Motor neuron (in vitro differentiated cells): ENCODE measurements at regions of chr9 and their contacts with region 1.

Region 1: GRCh38 chr9:76458903-76459690 is at the start of gene GCNT1:
- ATAC-seq: peak; percentile 79 to 97 (median 94)
- H3K4me3 ChIP-seq: peak within 1 kb of the TSS; percentile 46 to 64 (median 46)
- H3K27ac ChIP-seq: no peak within 1 kb of the TSS
- H3K4me1 ChIP-seq: peaks cover 0 to 9% of the 10 kb centered on the region in 2 donors
- total RNA-seq, gene GCNT1: 0.60 to 2.7 (median 1.3) TPM

Region 2: GRCh38 chr9:76704593-76705204 is 245.6 kb after region 1 on chr9:
- in situ Hi-C with region 1: loop called in 1 of 9 experiments (anchors 25 kb)
- ATAC-seq: peak in 6 of 8 experiments; percentile 37 to 97 (median 75)
- H3K4me3 ChIP-seq: no peak overlapping the region
- H3K27ac ChIP-seq: no peak overlapping the region
- H3K4me1 ChIP-seq: peaks cover 19 to 20% of the 10 kb centered on the region in 2 donors